ENCODE measurements at regions of chr6 and their contacts with region 1.

Region 1: GRCh38 chr6:127516666-127517273 is 2.4 kb downstream of the MTCL3 start:
- DNase-seq: peak; percentile 69
- ATAC-seq: peak; percentile 33
- H3K4me3 Mint-ChIP-seq: peak overlapping the region; percentile 92
- H3K27ac Mint-ChIP-seq: peak overlapping the region; percentile 94
- H3K4me1 Mint-ChIP-seq: peaks cover 37% of the 10 kb centered on the region
- H3K27me3 Mint-ChIP-seq: peaks cover 26% of the 10 kb centered on the region
- CTCF ChIP-seq: peak; percentile 77

Region 2: GRCh38 chr6:127342946-127343808 is 173.6 kb before region 1 on chr6 and contains the start of gene ECHDC1:
- CTCF ChIA-PET with region 1: interaction called, 10 read pairs
- POLR2A ChIA-PET with region 1: no interaction called
- DNase-seq: peak; percentile 56
- ATAC-seq: peak; percentile 57
- H3K4me3 Mint-ChIP-seq: no peak within 1 kb of the TSS
- H3K27ac Mint-ChIP-seq: no peak within 1 kb of the TSS
- H3K4me1 Mint-ChIP-seq: peaks cover 21% of the 10 kb centered on the region
- H3K27me3 Mint-ChIP-seq: no peaks in the 10 kb centered on the region
- CTCF ChIP-seq: no peak
- total RNA-seq, gene ECHDC1: 43.1 to 60.0 TPM (median 44.3 TPM) in 3 replicates

Region 3: DNA sequence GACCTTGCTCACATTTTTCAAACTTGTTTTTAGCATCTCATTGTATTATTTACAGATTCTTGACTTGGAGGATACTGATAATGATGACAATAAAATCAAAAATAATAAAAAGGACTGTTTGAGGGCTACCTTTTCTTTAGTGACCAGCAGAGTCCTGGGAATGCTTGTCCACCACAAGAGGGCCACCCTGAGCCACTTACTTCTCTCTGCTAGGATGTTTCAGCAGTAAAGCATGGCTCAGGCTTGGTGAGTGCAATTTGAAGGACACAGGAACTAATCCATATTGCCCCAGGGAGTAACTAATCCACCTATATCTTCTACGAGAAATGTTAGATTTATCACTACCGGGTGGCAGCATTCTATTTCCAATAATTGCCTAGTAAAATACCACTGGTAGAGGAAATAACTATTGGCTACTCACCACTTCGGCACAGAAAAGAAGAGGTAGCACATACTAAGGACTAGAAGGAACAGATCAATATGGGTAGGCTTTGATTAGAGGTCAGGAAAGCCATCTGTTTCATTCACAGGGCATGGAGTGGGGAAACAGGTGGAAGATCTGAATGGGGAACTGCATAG is 51.8 kb before region 1 on chr6:
- CTCF ChIA-PET with region 1: interaction called, 55 read pairs
- POLR2A ChIA-PET with region 1: interaction called, 10 read pairs
- DNase-seq: peak; percentile 77
- ATAC-seq: peak; percentile 95
- H3K4me3 Mint-ChIP-seq: no peak overlapping the region
- H3K27ac Mint-ChIP-seq: peak overlapping the region; percentile 7
- H3K4me1 Mint-ChIP-seq: peaks cover 29% of the 10 kb centered on the region
- H3K27me3 Mint-ChIP-seq: no peaks in the 10 kb centered on the region
- CTCF ChIP-seq: peak; percentile 78

Region 4: GRCh38 chr6:127484212-127484858 is 32.4 kb before region 1 on chr6:
- CTCF ChIA-PET with region 1: interaction called, 106 read pairs
- POLR2A ChIA-PET with region 1: interaction called, 24 read pairs
- DNase-seq: no peak
- ATAC-seq: no peak
- H3K4me3 Mint-ChIP-seq: no peak overlapping the region; the same call in 1 of the 2 replicates
- H3K27ac Mint-ChIP-seq: peak overlapping the region; percentile 99
- H3K4me1 Mint-ChIP-seq: peaks cover 82% of the 10 kb centered on the region
- H3K27me3 Mint-ChIP-seq: no peaks in the 10 kb centered on the region
- CTCF ChIP-seq: no peak

Region 5: GRCh38 chr6:127503022-127503421 is 13.7 kb before region 1 on chr6:
- CTCF ChIA-PET with region 1: interaction called, 33 read pairs
- POLR2A ChIA-PET with region 1: interaction called, 4 read pairs
- DNase-seq: no peak
- ATAC-seq: no peak
- H3K4me3 Mint-ChIP-seq: no peak overlapping the region
- H3K27ac Mint-ChIP-seq: no peak overlapping the region
- H3K4me1 Mint-ChIP-seq: no peaks in the 10 kb centered on the region
- H3K27me3 Mint-ChIP-seq: no peaks in the 10 kb centered on the region
- CTCF ChIP-seq: no peak

Region 6: GRCh38 chr6:127539272-127539671 is 22.5 kb after region 1 on chr6:
- CTCF ChIA-PET with region 1: interaction called, 38 read pairs
- POLR2A ChIA-PET with region 1: interaction called, 5 read pairs
- DNase-seq: no peak
- ATAC-seq: no peak
- H3K4me3 Mint-ChIP-seq: no peak overlapping the region
- H3K27ac Mint-ChIP-seq: no peak overlapping the region
- H3K4me1 Mint-ChIP-seq: peaks cover 7% of the 10 kb centered on the region
- H3K27me3 Mint-ChIP-seq: no peaks in the 10 kb centered on the region
- CTCF ChIP-seq: no peak